ENCODE measurements at regions of chrX and their contacts with region 1.

Region 1: GRCh38 chrX:71652405-71652804 is 14.9 kb upstream of the LOC101059915 start:
- DNase-seq: no peak
- ATAC-seq: peak; percentile 77
- H3K4me3 ChIP-seq: no peak overlapping the region
- H3K27ac ChIP-seq: no peak overlapping the region
- H3K4me1 ChIP-seq: 0 out of 2 replicates have a peak, but pooled peaks cover 3% of the 10 kb centered on the region
- H3K27me3 ChIP-seq: no peaks in the 10 kb centered on the region
- CTCF ChIP-seq: peak; percentile 64 to 73 (median 73)
- EP300 ChIP-seq: no peak
- POLR2A ChIP-seq: no peak
- RAD21 ChIP-seq: peak; percentile 89

Region 2: GRCh38 chrX:71532753-71533425 is 119.5 kb before region 1 on chrX and contains the start of gene OGT:
- CTCF ChIA-PET with region 1: interaction called, 7 read pairs
- POLR2A ChIA-PET with region 1: no interaction called
- RAD21 ChIA-PET with region 1: interaction called, 8 read pairs
- SMC1A ChIA-PET with region 1: interaction called, 5 read pairs
- in situ Hi-C with region 1: no loop called
- intact Hi-C with region 1: loop called (anchors 5 kb)
- DNase-seq: peak; percentile 79
- ATAC-seq: peak; percentile 86
- H3K4me3 ChIP-seq: peak within 1 kb of the TSS; percentile 71
- H3K27ac ChIP-seq: peak within 1 kb of the TSS; percentile 83
- H3K4me1 ChIP-seq: 0 out of 2 replicates have a peak, but pooled peaks cover 3% of the 10 kb centered on the region
- H3K27me3 ChIP-seq: no peaks in the 10 kb centered on the region
- CTCF ChIP-seq: no peak
- EP300 ChIP-seq: peak in 1 of 2 experiments; percentile 49; a peak in 1 of 4 replicates
- POLR2A ChIP-seq: peak; percentile 82
- RAD21 ChIP-seq: no peak
- polyA plus RNA-seq, gene OGT: 38.2 to 43.8 TPM

Region 3: GRCh38 chrX:71565474-71566041 is 86.8 kb before region 1 on chrX:
- CTCF ChIA-PET with region 1: interaction called, 25 read pairs
- POLR2A ChIA-PET with region 1: interaction called, 3 read pairs
- RAD21 ChIA-PET with region 1: interaction called, 4 read pairs
- SMC1A ChIA-PET with region 1: interaction called, 14 read pairs
- in situ Hi-C with region 1: no loop called
- intact Hi-C with region 1: no loop called
- DNase-seq: no peak
- ATAC-seq: no peak
- H3K4me3 ChIP-seq: no peak overlapping the region
- H3K27ac ChIP-seq: no peak overlapping the region
- H3K4me1 ChIP-seq: no peaks in the 10 kb centered on the region
- H3K27me3 ChIP-seq: no peaks in the 10 kb centered on the region
- CTCF ChIP-seq: no peak
- EP300 ChIP-seq: no peak
- POLR2A ChIP-seq: no peak
- RAD21 ChIP-seq: no peak

Region 4: GRCh38 chrX:71622576-71623450 is 29.6 kb before region 1 on chrX:
- CTCF ChIA-PET with region 1: interaction called, 24 read pairs
- POLR2A ChIA-PET with region 1: interaction called, 6 read pairs
- RAD21 ChIA-PET with region 1: interaction called, 24 read pairs
- SMC1A ChIA-PET with region 1: interaction called, 33 read pairs
- in situ Hi-C with region 1: loop called (anchors 5 kb)
- intact Hi-C with region 1: loop called (anchors 1 kb)
- DNase-seq: peak; percentile 68
- ATAC-seq: peak; percentile 70
- H3K4me3 ChIP-seq: no peak overlapping the region
- H3K27ac ChIP-seq: peak overlapping the region; percentile 89
- H3K4me1 ChIP-seq: peaks cover 56% of the 10 kb centered on the region
- H3K27me3 ChIP-seq: no peaks in the 10 kb centered on the region
- CTCF ChIP-seq: 0 out of 6 replicates have a peak, but pooled peaks of 1 of the 3 experiments have one; percentile 9
- EP300 ChIP-seq: peak; percentile 98
- POLR2A ChIP-seq: no peak; the same call in 1 of the 2 replicates
- RAD21 ChIP-seq: no peak